PC-9 (cell line): ENCODE measurements at regions of chr13 and their contacts with region 1.

Region 1: DNA sequence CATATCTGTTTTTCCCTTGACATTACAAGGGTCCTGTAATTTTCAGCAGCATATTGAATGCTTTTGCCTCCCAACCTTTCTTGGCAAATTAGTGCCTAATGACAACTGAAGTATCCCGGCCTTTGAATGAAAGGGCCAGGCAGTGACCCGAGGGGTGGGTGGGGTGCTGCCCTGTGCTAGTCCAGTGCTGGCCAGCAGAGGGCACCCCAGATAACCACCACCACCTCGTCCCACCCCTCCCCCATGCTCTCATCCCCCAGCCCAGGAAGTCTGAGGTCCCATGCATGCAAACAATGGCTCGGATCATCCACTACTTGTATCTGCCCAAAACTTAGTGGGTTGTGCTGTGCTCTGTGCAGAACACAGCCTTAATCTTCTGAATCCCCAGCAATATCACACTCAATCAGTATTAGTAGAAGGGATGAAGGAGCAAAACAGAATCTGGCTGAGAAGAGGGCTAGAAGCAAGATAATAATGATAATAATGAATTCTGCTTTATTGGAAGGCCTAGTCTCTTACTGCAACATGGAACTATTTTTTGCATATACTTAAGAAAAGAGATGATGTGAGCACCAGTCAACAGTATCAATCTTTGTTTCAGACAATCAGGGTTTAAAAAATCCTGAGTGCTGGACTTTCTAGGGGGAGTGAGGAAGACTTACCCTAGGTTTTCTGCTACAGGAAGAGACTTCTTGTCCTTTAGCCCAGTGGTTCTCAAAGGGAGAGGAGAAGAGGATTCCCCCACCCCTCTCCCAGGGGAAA is 3.8 kb downstream of the ATP12A start:
- DNase-seq: peak in 1 of 2 experiments; percentile 51
- H3K4me3 ChIP-seq: no peak overlapping the region
- H3K27ac ChIP-seq: no peak overlapping the region
- H3K4me1 ChIP-seq: no peaks in the 10 kb centered on the region
- H3K27me3 ChIP-seq: peaks cover 13% of the 10 kb centered on the region
- CTCF ChIP-seq: peak; percentile 90

Region 2: DNA sequence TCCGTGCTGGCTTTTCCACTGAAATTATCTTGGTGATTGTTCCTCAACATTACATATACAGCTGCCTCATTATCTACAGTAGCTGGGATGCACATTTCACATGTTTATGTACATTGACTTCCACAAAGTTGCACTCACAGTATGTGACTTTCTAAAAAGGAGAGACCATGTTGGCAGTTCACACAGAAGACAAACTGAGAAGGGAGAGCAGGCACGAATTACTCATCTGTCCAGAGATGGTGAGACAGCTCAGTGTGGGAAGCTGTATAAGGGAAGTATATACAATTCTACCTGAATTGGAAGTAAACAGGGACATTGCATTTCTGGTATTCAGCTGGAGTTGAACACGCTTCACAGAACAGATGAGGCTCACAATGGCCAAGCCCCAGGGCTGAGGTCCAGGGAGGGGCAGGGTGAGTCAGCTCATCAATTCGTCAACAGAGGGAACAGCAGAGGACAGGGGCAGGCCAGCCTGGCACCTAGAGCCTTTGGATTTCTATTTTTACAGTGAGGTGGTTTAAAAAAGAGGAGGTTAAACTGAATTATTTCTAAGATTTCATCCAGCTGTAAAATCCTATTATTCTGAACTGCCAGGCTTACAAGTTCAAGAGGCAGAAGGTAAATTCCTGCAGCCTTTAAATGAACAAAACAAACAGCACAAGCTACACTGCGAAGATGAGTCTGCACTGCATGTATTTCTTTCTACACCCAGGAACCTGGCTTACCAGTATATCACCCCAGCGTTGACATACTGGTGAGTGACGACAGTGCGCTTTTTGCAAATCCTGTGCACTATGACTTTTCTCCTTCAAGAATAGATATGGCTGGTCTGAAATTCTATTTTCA is 181.3 kb before region 1 on chr13:
- CTCF ChIA-PET with region 1: interaction called, 10 read pairs
- POLR2A ChIA-PET with region 1: no interaction called
- intact Hi-C with region 1: no loop called
- DNase-seq: peak; percentile 80 to 93
- H3K4me3 ChIP-seq: peak overlapping the region; percentile 15; the same call in 1 of the 2 replicates
- H3K27ac ChIP-seq: peak overlapping the region; percentile 89
- H3K4me1 ChIP-seq: peaks cover 61% of the 10 kb centered on the region
- H3K27me3 ChIP-seq: no peaks in the 10 kb centered on the region
- CTCF ChIP-seq: no peak

Region 3: GRCh38 chr13:24716011-24716410 is 32.0 kb after region 1 on chr13:
- CTCF ChIA-PET with region 1: no interaction called
- POLR2A ChIA-PET with region 1: no interaction called
- intact Hi-C with region 1: no loop called
- DNase-seq: no peak
- H3K4me3 ChIP-seq: no peak overlapping the region
- H3K27ac ChIP-seq: no peak overlapping the region
- H3K4me1 ChIP-seq: no peaks in the 10 kb centered on the region
- H3K27me3 ChIP-seq: peaks cover 14% of the 10 kb centered on the region; the same call in 1 of the 2 replicates
- CTCF ChIP-seq: no peak